HCT116 (cell line): ENCODE measurements at regions of chr7 and their contacts with region 1.

Region 1: GRCh38 chr7:12802098-12802497 is 114.7 kb downstream of the ARL4A start:
- DNase-seq: peak; percentile 42
- ATAC-seq: peak; percentile 57; the same call in 1 of the 2 replicates
- H3K4me3 ChIP-seq: peak overlapping the region in 1 of 2 experiments; percentile 42; a peak in 2 of 4 replicates
- H3K27ac ChIP-seq: peak overlapping the region; percentile 54
- H3K4me1 ChIP-seq: peaks cover 35 to 38% of the 10 kb centered on the region in 2 experiments
- H3K27me3 ChIP-seq: no peaks in the 10 kb centered on the region
- CTCF ChIP-seq: no peak
- POLR2A ChIP-seq: no peak
- RAD21 ChIP-seq: peak; percentile 25

Region 2: GRCh38 chr7:13017333-13017853 is 215.3 kb after region 1 on chr7:
- CTCF ChIA-PET with region 1: no interaction called
- POLR2A ChIA-PET with region 1: no interaction called
- RAD21 ChIA-PET with region 1: no interaction called
- intact Hi-C with region 1: loop called (anchors 5 kb)
- DNase-seq: peak; percentile 96
- ATAC-seq: peak; percentile 84
- H3K4me3 ChIP-seq: peak overlapping the region; percentile 30 to 62
- H3K27ac ChIP-seq: peak overlapping the region; percentile 93
- H3K4me1 ChIP-seq: peaks cover 24 to 62% of the 10 kb centered on the region in 2 experiments
- H3K27me3 ChIP-seq: no peaks in the 10 kb centered on the region
- CTCF ChIP-seq: no peak
- POLR2A ChIP-seq: no peak
- RAD21 ChIP-seq: peak; percentile 30; the same call in 1 of the 2 replicates